ENCODE measurements at regions of chr10 and their contacts with region 1.

Region 1: GRCh38 chr10:29841724-29842649 is 207.2 kb upstream of the SVIL start:
- DNase-seq: no peak
- H3K4me3 ChIP-seq: no peak overlapping the region
- H3K27ac ChIP-seq: no peak overlapping the region
- H3K4me1 ChIP-seq: peaks cover 21% of the 10 kb centered on the region
- H3K27me3 ChIP-seq: no peaks in the 10 kb centered on the region
- CTCF ChIP-seq: no peak

Region 2: DNA sequence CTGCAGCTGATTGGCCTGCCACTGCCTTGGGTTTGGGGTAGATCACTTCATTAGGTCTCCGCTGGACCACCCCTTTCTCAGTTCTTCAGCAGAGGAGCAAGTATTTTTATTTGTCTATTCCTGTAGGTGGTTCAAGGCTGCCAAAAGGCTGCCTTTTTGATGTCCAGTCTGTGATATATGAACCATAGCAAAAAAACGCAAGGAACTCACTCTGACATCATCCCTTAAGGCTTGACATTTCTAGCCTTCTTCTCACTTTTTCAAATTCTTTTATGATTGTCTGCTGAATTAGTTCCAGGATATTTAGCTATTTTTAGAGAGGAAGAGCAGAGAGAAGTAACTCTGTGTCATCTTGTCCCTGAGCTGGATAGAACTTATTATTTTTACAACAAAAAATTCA is 895.5 kb before region 1 on chr10:
- CTCF ChIA-PET with region 1: no interaction called
- dilution Hi-C with region 1: no loop called
- in situ Hi-C with region 1: no loop called
- intact Hi-C with region 1: no loop called
- DNase-seq: no peak
- H3K4me3 ChIP-seq: no peak overlapping the region
- H3K27ac ChIP-seq: no peak overlapping the region
- H3K4me1 ChIP-seq: no peaks in the 10 kb centered on the region
- H3K27me3 ChIP-seq: no peaks in the 10 kb centered on the region
- CTCF ChIP-seq: no peak

Region 3: DNA sequence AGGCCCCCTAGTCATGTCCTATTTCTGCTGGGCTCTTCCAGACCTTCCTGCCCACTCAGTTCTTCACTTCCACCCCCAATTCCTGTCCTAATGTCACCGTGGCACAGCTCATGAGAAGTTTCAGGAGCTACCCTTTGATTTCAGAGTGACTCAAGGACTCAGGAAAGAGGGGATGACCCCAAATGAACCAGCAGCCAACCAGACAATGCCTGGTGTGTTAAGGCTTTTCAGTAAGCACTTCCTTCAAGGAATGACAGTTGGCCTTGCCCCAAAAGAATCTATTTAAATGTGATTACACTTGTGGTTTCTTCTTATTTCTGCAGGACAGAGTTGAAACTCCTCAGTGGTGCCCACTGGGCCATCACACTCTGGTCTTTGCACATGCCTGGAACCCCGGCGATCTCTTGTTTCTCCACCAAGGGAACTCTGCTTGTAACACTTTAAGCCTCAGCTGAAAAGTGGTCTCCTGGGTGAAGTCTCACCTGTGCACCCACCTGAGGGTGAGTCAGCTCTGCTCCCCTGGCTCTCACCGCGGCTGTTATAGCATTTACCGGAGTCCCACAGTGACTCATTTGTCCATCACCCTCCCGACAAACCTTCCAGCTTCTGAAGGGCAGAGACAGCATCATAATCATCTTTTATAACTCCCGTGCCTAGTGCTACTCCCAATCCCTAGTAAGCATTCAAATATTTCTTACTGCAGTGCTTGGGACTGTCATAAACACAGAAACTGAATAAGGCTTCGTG is 84.3 kb before region 1 on chr10:
- CTCF ChIA-PET with region 1: interaction called, 7 read pairs
- dilution Hi-C with region 1: loop called (anchors 5 kb)
- in situ Hi-C with region 1: no loop called
- intact Hi-C with region 1: no loop called
- DNase-seq: peak; percentile 99
- H3K4me3 ChIP-seq: no peak overlapping the region
- H3K27ac ChIP-seq: peak overlapping the region; percentile 61
- H3K4me1 ChIP-seq: peaks cover 19% of the 10 kb centered on the region
- H3K27me3 ChIP-seq: no peaks in the 10 kb centered on the region
- CTCF ChIP-seq: no peak

Region 4: GRCh38 chr10:29804025-29804852 is 37.7 kb before region 1 on chr10:
- CTCF ChIA-PET with region 1: no interaction called
- dilution Hi-C with region 1: loop called (anchors 5 kb)
- in situ Hi-C with region 1: no loop called
- intact Hi-C with region 1: no loop called
- DNase-seq: peak; percentile 96
- H3K4me3 ChIP-seq: no peak overlapping the region
- H3K27ac ChIP-seq: peak overlapping the region; percentile 93
- H3K4me1 ChIP-seq: peaks cover 50% of the 10 kb centered on the region
- H3K27me3 ChIP-seq: no peaks in the 10 kb centered on the region
- CTCF ChIP-seq: no peak

Region 5: GRCh38 chr10:30114871-30115625 is 273.1 kb after region 1 on chr10:
- CTCF ChIA-PET with region 1: no interaction called
- dilution Hi-C with region 1: no loop called
- in situ Hi-C with region 1: no loop called
- intact Hi-C with region 1: no loop called
- DNase-seq: no peak
- H3K4me3 ChIP-seq: no peak overlapping the region
- H3K27ac ChIP-seq: no peak overlapping the region
- H3K4me1 ChIP-seq: no peaks in the 10 kb centered on the region
- H3K27me3 ChIP-seq: no peaks in the 10 kb centered on the region
- CTCF ChIP-seq: no peak